HEK293 (cell line): ENCODE measurements at regions of chr17 and their contacts with region 1.

Region 1: DNA sequence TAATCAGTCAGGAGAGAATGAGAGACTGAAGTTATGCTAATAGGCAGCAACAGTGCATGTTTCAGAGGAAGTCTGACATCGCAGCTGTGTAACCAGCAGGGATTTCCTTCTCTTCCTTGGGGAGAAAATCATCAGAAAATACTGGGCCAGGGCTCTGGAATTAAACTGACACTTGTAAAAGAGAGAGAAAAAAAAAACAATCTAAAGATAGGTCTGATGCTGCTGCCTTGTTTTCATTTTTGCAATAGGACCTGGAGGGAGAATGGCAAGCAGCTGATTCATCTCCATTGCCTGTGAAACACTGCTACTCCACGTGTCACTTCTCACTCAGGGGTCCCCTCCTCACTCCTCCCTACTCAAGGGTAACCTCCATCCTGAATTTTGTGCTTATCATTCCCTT is 17.7 kb upstream of the CORO6 start:
- H3K4me3 ChIP-seq: no peak overlapping the region
- H3K27ac ChIP-seq: no peak overlapping the region
- H3K4me1 ChIP-seq: peaks cover 35% of the 10 kb centered on the region
- CTCF ChIP-seq: no peak

Region 2: DNA sequence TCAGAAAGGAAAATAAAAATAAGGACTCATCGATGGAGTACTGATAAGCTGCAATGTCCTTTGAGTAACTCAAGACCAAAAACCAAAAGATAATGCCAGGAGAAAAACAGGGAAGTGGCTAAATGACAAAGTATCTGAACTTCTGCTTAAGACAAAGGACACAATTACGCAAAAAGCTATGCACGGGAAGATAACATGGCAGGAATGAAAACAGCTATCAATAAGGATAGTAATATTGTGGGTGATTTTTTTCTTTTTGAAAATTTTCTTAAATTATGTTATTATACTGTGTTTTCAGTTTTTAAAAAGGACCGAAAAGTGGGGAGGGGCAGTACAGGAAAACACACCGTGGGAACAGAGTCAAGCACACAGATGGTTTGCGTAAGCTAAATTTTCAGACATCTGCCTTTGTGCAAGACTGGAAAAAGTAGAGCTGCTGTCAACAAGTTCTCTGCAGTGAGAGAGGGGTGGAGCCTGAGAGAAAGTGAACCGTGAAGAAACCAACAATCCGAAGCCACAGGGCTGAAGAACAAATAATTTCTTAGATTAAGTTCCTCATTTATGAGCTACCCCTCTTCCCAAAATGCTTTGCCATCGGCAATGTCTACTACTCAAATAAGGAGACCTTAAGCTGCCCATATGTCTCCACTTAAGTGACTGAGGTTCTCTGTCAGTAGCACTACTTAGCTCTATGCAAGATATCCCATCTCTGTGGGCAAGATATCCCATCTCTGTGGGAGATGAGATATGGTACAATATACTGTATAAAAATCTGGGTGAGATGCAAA is 82.2 kb after region 1 on chr17:
- CTCF ChIA-PET with region 1: interaction called, 10 read pairs
- POLR2A ChIA-PET with region 1: interaction called, 4 read pairs
- H3K4me3 ChIP-seq: no peak overlapping the region
- H3K27ac ChIP-seq: no peak overlapping the region
- H3K4me1 ChIP-seq: peaks cover 8% of the 10 kb centered on the region; the same call in 1 of the 2 replicates
- CTCF ChIP-seq: no peak

Region 3: DNA sequence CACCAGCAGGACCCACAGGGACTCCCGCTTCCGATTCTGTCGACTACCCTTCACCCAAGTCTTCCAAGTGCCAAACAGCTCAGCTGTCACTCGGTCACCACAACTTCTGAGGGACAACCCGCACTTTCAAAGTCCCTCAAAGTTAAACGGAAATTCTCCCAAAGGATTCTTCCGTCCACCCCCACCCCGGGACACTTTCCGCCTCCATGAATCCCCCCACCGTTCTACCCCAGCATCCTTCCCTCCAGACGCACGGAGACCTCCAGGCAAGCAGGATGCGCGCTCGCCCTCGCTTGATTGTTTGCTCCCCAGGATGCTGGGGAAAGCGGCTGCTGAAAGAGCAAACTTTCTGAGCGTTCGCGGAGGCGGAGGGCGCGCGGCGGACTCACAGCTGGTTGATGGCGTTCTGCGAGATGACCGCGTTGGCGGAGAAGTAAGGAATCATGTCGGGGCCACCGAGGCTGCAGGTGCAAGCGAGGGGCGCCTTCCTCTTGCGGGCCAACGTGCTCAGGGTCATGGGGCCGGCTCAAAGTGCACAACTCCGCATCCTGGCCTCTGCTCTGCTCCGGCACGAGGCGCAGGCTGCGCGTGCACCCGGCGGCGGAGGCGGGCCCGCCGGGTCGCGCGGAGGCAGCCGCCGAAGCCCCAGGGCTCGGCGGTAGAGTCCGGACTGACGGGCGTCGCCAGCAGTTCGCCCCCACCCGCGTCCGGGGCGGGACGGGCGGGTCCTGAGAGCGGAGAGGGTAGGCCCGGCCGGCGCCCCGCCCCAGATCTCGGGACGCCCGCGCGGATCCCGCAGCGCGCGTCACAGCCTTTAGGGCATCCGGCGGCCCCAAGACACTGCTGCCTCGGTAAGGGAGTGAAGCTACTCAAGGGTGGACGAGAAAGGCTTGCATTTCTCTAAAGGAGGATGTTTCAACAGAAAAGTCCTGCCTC is 120.6 kb after region 1 on chr17:
- CTCF ChIA-PET with region 1: interaction called, 17 read pairs
- POLR2A ChIA-PET with region 1: no interaction called
- H3K4me3 ChIP-seq: peak overlapping the region; percentile 86
- H3K27ac ChIP-seq: peak overlapping the region; percentile 81
- H3K4me1 ChIP-seq: peaks cover 22% of the 10 kb centered on the region
- CTCF ChIP-seq: no peak; the same call in 1 of the 2 replicates

Region 4: DNA sequence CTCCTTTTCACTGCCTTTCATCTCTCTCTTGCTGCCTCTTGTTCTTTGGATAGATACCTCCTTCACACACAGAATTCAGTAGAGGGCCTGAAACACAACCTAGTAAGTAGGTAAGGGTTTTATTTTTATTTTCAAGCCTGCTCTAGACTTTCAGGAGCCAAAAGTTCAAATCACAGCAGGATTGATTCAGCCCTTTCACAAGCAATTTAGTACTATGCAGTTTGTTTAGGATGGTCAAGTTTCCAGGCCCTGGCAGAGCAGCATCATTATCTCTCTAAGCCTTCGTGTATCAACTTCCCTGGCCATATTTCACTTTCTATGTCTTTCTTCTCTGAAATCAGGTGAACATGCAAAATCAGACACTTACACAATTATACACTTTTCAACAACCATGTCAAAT is 131.1 kb after region 1 on chr17:
- CTCF ChIA-PET with region 1: interaction called, 161 read pairs
- POLR2A ChIA-PET with region 1: no interaction called
- H3K4me3 ChIP-seq: no peak overlapping the region
- H3K27ac ChIP-seq: no peak overlapping the region
- H3K4me1 ChIP-seq: peaks cover 6% of the 10 kb centered on the region; the same call in 1 of the 2 replicates
- CTCF ChIP-seq: no peak

Region 5: GRCh38 chr17:29807520-29808351 is 167.3 kb after region 1 on chr17:
- CTCF ChIA-PET with region 1: interaction called, 37 read pairs
- POLR2A ChIA-PET with region 1: no interaction called
- H3K4me3 ChIP-seq: no peak overlapping the region
- H3K27ac ChIP-seq: no peak overlapping the region
- H3K4me1 ChIP-seq: no peaks in the 10 kb centered on the region
- CTCF ChIP-seq: peak; percentile 23; the same call in 1 of the 2 replicates